HEK293 (cell line): ENCODE measurements at regions of chr5 and their contacts with region 1.

Region 1: DNA sequence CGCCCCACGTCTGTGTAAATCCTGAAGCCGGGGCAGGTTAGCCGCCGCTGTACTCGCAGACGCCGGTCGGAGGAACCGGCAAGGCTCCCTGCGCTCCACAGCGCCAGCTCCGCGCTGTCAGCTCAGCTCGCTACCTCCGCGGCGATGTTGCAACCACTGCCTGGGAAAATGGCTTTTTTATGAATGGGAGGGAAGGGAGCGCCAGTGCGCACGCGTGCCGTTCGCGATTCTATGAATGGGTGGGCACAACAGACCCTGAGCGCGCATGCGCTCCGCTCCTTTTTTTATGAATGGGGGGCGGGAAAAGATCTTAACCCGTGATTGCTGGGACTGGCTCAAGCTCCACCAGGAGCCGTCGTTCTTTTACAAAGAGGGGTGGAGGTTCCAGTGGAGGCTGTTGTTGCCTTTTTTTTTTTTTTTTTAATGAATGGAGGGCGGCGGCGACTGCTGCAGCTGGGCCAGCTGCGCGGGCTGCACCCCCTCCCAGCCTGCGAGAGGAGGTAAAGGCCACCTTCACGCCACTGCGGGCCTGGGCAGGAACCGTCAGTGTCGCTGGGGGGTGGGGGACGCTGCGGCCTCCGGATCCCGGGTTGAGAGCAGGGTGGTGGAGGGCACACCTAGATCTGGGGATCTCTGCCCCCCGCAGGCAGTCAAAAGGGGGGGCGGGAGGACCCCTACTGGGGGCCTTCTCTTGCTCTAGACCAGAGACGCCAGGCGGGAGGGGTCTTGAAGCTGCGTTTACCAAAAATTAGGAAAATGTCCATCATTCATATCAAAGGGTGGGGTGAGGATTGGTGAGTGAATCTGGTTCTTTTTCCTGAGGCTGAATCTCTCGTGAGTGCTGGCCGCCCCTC is at the start of gene SPRY4:
- H3K4me3 ChIP-seq: peak within 1 kb of the TSS; percentile 58
- H3K27ac ChIP-seq: peak within 1 kb of the TSS; percentile 79
- H3K4me1 ChIP-seq: peaks cover 30% of the 10 kb centered on the region
- CTCF ChIP-seq: peak; percentile 81; the same call in 1 of the 2 replicates

Region 2: GRCh38 chr5:140575309-140575708 is 1749.8 kb before region 1 on chr5:
- CTCF ChIA-PET with region 1: no interaction called
- POLR2A ChIA-PET with region 1: no interaction called
- H3K4me3 ChIP-seq: no peak overlapping the region
- H3K27ac ChIP-seq: no peak overlapping the region
- H3K4me1 ChIP-seq: no peaks in the 10 kb centered on the region
- CTCF ChIP-seq: no peak

Region 3: GRCh38 chr5:142053426-142054151 is 271.5 kb before region 1 on chr5:
- CTCF ChIA-PET with region 1: no interaction called
- POLR2A ChIA-PET with region 1: no interaction called
- H3K4me3 ChIP-seq: no peak overlapping the region
- H3K27ac ChIP-seq: no peak overlapping the region
- H3K4me1 ChIP-seq: peaks cover 18% of the 10 kb centered on the region
- CTCF ChIP-seq: no peak

Region 4: DNA sequence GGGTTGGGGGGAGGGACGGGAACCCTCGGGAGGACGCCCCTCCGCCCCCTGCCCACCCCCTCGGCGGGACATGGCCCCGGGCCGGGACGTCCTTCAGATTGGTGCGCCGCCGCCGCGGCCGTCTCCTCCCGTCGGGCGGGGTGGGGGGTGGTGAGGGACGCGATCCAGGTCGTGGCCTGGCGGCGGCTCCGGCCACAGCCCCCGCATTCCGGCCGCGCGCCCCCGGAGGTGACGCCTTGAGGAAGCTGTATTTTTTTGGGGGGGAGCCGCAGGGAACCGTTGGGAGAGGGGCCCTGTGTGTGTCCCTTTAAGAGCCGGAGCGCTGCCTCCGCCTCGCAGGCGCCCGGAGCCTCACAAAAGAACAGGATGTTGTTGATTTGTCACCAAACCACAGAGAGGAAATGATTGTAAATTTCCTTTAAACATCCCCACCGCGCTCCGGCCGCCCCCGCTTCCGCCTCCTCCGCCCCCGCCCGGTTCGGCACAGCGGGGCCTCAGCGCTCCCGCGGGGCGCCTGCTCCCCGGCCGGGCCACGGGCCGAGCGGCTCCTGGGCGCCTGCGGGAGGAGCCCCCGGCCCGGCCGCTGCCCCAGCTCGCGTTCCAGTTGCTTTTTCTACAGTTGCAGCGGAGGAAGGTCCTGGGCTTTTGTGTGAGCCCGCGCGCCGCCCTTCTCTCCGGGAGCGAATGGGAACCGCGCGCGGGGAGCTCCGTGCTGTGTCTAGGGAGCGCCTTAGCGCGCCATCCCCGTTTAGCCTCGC is 31.8 kb after region 1 on chr5:
- CTCF ChIA-PET with region 1: interaction called, 3 read pairs
- POLR2A ChIA-PET with region 1: interaction called, 11 read pairs
- H3K4me3 ChIP-seq: peak overlapping the region; percentile 63
- H3K27ac ChIP-seq: peak overlapping the region; percentile 94
- H3K4me1 ChIP-seq: peaks cover 9% of the 10 kb centered on the region
- CTCF ChIP-seq: no peak